ENCODE measurements at regions of chr2 and their contacts with region 1.

Region 1: DNA sequence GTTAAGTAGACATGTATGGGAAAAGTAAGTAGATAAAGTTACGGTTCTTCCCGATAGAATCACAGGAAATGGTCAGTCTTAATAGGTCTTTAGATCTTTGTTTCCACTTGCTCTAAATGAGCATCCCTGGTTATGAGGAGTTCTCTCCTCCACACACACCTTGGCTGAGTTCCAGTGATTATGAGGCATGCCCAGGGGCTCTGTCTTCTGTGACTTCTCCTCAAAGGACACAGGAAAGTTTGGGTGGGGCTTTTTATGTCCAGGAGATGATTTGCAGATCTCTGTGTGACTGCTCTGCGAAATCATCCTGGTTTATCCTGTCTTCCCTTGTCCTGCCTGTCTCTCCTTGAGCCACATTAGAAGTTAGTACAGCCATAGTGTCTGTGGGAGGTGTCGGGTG is 83.9 kb upstream of the EML6 start:
- DNase-seq: no peak

Region 2: GRCh38 chr2:54330162-54330925 is 309.3 kb before region 1 on chr2:
- intact Hi-C with region 1: no loop called
- DNase-seq: peak; percentile 94 to 99 (median 97)

Region 3: DNA sequence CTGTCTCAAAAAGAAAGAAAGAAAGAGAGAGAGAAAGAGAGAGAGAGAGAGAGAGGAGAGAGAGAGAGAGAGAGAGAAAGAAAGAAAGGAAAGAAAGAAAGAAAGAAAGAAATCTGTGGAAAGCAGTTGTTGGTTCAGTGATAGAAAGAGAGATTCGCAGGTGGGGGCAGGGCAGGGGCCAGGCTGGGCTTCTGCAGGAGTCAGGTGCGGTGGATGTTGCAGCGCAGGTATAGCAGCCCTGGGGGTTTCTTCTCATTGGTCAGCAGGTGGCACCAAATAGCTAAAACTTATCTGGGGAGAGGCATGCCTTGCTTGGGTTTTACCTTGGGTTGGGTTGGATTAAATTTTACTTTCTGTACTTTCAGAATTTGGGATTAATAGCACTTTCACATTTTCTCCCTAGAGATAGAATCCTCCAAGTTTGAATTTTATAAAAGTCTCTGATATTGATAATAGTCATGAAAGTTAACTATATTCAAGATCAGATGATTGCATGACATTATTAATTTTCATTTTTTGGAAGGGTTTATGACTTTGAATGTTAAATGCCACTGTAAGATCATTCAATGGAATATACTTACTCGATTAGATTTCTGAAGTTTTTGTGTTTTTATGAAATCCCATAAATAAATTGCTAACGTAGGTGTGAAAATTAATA is 116.9 kb before region 1 on chr2:
- intact Hi-C with region 1: loop called (anchors 10 kb)
- DNase-seq: peak in 2 of 10 donors; percentile 33 to 81

Measured in posterior cingulate gyrus (tissue), 11 donors.